ENCODE measurements at regions of chr7 and their contacts with region 1.

Region 1: GRCh38 chr7:139767561-139767982 is 10.2 kb downstream of the HIPK2 start:
- DNase-seq: peak; percentile 39
- CTCF ChIP-seq: no peak

Region 2: GRCh38 chr7:139645572-139646523 is 121.7 kb before region 1 on chr7:
- in situ Hi-C with region 1: loop called (anchors 10 kb)
- DNase-seq: peak; percentile 69
- CTCF ChIP-seq: peak; percentile 91

Region 3: DNA sequence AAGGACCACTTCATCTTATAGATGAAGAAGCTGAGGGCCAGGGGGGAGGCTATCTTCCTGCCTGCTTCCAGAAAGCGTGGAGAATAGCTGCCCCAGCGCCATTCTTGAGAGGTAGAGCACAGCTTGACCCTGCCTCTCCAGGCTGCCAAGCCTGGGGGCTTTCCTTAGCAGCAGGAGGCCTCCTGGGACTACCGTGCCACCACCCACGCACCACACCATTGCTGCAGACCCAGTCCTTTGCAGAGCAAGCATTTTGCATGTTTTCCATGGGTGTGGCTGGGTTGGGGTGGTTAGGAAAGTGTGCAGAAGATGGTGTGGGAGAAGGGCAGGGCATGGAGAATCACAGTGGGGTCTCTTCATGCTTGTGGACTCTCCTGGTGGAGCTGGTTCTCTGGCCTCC is 126.4 kb after region 1 on chr7:
- in situ Hi-C with region 1: no loop called
- DNase-seq: no peak
- CTCF ChIP-seq: no peak